Endothelial cell of umbilical vein (primary cell): ENCODE measurements at regions of chrX and their contacts with region 1.

Region 1: GRCh38 chrX:37846934-37847732 is at the start of gene DYNLT3:
- DNase-seq: peak; percentile 83
- H3K4me3 ChIP-seq: peak within 1 kb of the TSS; percentile 74 to 86 (median 85)
- H3K27ac ChIP-seq: peak within 1 kb of the TSS; percentile 48
- H3K4me1 ChIP-seq: peaks cover 3% of the 10 kb centered on the region
- H3K27me3 ChIP-seq: no peaks in the 10 kb centered on the region
- CTCF ChIP-seq: no peak
- POLR2A ChIP-seq: no peak
- total RNA-seq, gene DYNLT3: 22.8 and 25.8 TPM in 2 replicates

Region 2: DNA sequence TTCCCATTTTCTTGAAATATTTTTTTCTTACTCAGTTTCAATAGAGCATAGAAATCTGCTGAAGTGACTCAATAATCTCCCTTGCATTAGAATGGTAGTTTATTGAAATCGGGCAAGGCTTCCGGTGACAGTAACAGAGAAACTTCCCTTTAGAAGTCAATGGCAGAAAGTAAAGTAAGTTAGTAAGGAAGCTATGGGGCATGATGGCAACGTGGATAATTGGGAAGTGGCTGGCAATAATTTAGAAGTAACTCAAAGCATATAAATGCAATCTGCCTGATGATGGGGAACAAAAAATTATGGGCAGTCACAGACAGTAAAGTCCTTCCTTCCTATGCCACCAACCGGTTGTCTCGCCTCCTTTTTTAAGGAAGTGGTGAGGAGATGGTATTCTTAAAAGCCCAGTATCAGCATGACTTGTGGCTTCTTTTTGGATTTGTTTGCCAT is 59.7 kb before region 1 on chrX:
- CTCF ChIA-PET with region 1: no interaction called
- POLR2A ChIA-PET with region 1: no interaction called
- dilution Hi-C with region 1: no loop called
- intact Hi-C with region 1: no loop called
- DNase-seq: no peak
- H3K4me3 ChIP-seq: no peak overlapping the region
- H3K27ac ChIP-seq: no peak overlapping the region
- H3K4me1 ChIP-seq: no peaks in the 10 kb centered on the region
- H3K27me3 ChIP-seq: no peaks in the 10 kb centered on the region
- CTCF ChIP-seq: no peak
- POLR2A ChIP-seq: no peak

Region 3: DNA sequence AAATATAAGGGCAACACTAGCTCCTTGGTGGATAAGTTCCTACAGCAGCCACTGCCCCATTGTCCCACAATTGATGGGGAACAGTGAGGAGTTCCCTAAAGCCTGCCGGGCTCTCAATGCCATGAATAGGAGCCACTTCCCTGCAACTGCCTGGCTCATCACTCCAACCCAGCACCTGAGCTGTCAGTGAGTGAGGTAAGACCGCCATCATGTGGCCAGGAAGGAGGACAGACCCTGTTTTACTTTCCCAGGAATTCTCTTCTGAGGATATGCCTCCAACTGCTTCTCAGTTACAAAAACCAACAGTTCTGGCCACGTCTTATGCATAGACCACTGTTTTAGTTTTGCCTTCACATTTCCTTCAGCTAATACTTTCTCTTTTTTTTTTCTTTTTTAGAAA is 328.0 kb after region 1 on chrX:
- CTCF ChIA-PET with region 1: no interaction called
- POLR2A ChIA-PET with region 1: no interaction called
- dilution Hi-C with region 1: no loop called
- intact Hi-C with region 1: loop called (anchors 10 kb)
- DNase-seq: peak; percentile 7
- H3K4me3 ChIP-seq: no peak overlapping the region
- H3K27ac ChIP-seq: no peak overlapping the region
- H3K4me1 ChIP-seq: no peaks in the 10 kb centered on the region
- H3K27me3 ChIP-seq: no peaks in the 10 kb centered on the region
- CTCF ChIP-seq: peak; percentile 10 to 31
- POLR2A ChIP-seq: no peak

Region 4: DNA sequence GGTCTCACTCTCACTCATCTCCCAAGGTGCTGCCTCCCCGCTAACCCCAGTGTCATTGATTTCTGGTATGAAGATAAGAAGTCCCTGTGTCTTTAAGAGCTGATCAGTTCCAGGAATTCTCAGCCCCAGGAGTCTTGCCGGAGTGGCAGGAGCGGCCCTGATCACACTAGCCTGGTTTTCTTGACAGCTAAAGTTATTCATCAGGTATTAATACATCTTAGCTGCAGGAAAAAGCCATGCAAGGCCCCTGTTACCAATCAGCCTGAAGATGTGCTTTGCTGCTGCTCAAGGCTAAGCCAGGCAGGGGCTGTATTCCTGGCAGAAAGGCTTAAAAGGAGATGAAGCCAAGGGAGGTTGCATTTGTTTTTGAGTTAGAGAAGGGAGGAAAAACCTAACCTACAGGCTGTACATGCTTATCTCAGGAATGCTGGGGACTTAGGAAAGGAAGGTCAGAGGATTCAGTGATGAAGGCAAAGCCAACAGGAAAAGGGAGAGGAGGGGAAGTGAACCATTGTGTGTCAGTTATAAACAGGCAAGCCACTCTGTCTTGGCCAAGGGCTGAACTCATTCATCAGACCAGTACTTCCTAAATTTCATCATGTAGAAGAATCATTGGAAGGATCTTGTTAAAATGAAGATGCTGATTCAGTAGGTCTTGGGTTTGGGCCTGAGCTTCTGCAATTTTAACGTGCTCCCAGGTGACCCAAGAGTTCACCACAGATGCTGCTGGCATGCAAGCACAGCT is 364.9 kb after region 1 on chrX:
- CTCF ChIA-PET with region 1: no interaction called
- POLR2A ChIA-PET with region 1: no interaction called
- dilution Hi-C with region 1: no loop called
- intact Hi-C with region 1: loop called (anchors 1 kb)
- DNase-seq: peak; percentile 87
- H3K4me3 ChIP-seq: peak overlapping the region in 1 of 3 experiments; percentile 46
- H3K27ac ChIP-seq: peak overlapping the region; percentile 75
- H3K4me1 ChIP-seq: peaks cover 57% of the 10 kb centered on the region
- H3K27me3 ChIP-seq: no peaks in the 10 kb centered on the region
- CTCF ChIP-seq: no peak
- POLR2A ChIP-seq: peak; percentile 17